AG04450 (cell line): ENCODE measurements at regions of chr19 and their contacts with region 1.

Region 1: DNA sequence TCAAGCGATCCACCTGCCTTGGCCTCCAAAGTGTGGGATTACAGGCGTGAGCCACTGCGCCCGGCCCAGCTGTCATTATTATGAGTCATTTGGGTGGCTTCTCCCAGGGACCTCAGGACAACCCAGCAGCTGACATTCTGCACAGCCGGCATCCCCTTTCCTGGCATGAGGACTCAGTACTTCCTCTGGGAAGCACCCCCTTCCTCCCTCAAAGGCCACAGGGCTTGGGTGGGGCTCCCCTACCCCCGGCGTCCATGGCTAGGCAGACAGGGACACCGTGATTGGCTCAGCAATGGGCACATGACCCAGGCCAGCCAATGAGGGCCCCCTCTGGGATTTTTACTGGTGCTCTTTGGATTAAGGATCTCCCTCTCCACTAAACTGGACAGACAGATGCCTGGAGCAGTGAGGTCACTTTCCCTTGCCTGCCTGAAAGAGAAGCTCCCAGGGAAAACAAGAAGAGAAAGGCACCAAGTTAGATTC is 6.0 kb downstream of the KANK2 start:
- DNase-seq: no peak
- H3K4me3 ChIP-seq: no peak overlapping the region
- H3K27ac ChIP-seq: peak overlapping the region; percentile 39
- H3K27me3 ChIP-seq: no peaks in the 10 kb centered on the region
- CTCF ChIP-seq: no peak

Region 2: DNA sequence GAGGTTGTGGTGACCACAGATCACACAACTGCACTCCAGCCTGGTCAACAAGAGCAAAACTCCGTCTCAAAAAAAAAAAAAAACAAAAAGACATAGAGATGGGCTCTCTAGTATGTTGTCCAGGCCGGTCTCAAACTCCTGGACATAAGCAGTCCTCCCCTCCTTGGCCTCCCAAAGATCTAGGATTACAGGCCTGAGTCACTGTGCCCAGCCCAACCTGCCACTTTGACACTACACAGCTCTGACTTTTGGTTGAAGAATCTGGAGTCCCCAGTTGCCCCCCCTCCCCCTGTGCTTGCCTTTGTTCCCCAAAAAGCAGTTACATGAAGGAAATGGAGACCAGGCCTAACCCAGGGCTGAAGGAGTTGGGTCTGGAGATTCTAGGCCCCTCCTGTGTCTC is 307.0 kb before region 1 on chr19:
- CTCF ChIA-PET with region 1: no interaction called
- POLR2A ChIA-PET with region 1: interaction called, 11 read pairs
- DNase-seq: no peak
- H3K4me3 ChIP-seq: no peak overlapping the region
- H3K27ac ChIP-seq: peak overlapping the region; percentile 39
- H3K27me3 ChIP-seq: no peaks in the 10 kb centered on the region
- CTCF ChIP-seq: no peak

Region 3: DNA sequence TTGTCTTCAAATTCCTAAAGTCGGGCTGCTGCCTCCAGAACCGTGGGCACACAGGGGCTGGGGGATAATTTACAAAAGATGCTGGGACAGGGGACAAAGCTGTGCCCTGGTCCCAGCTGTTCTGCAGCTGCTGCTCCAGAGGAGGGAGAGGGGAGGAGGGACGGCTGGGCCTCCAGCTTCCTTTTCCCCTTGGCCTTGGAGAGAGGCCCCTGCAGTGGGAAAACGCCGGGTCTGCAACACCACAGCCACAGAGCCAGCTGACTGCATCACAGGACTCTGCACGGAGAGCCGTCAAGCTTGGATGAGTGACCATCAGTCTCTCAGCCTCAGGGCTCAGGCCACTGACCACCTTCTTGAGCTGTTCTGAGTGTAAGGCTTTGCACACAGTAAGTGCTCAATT is 64.9 kb after region 1 on chr19:
- CTCF ChIA-PET with region 1: no interaction called
- POLR2A ChIA-PET with region 1: no interaction called
- DNase-seq: no peak
- H3K4me3 ChIP-seq: no peak overlapping the region
- H3K27ac ChIP-seq: peak overlapping the region; percentile 21
- H3K27me3 ChIP-seq: no peaks in the 10 kb centered on the region
- CTCF ChIP-seq: no peak

Region 4: DNA sequence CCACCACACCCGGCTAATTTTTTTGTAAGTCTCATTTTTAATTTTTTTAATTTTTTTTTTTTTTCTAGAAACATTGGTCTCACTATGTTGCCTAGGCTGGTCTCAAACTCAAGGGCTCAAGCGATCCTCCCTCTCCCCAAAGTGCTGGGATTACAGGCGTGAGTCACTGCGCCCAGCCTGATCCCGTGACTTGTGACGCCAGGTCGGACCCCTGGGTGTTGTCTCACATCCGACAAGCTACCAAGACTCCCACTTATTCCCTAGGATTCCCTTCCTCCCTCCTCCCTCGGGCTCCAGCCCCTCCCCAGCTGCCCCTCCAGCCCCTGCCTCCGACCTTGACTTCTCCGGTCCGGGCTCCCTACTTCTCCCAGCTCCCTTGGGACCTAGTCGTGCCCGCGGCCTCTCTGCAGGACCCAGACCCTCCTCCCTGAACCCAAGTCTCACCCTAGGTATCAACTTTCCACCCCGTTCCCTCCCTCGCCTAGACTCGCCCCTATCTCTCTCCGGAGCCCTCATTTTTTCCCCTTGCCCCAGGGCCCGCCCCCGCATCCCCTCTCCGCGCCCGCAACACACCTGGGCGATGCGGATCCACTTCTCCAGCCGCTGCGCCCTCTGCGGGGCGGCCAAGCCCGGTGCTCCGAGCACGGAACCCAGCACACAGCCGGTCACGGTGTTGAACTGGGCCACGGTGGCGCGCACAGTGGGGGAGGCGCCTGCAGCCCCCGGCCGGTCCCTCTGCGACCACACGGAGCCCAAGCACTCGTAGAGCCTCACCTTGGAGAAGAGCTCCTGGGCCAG is 214.7 kb after region 1 on chr19:
- CTCF ChIA-PET with region 1: no interaction called
- POLR2A ChIA-PET with region 1: no interaction called
- DNase-seq: no peak
- H3K4me3 ChIP-seq: no peak overlapping the region
- H3K27ac ChIP-seq: no peak overlapping the region
- H3K27me3 ChIP-seq: no peaks in the 10 kb centered on the region
- CTCF ChIP-seq: peak; percentile 46

Region 5: DNA sequence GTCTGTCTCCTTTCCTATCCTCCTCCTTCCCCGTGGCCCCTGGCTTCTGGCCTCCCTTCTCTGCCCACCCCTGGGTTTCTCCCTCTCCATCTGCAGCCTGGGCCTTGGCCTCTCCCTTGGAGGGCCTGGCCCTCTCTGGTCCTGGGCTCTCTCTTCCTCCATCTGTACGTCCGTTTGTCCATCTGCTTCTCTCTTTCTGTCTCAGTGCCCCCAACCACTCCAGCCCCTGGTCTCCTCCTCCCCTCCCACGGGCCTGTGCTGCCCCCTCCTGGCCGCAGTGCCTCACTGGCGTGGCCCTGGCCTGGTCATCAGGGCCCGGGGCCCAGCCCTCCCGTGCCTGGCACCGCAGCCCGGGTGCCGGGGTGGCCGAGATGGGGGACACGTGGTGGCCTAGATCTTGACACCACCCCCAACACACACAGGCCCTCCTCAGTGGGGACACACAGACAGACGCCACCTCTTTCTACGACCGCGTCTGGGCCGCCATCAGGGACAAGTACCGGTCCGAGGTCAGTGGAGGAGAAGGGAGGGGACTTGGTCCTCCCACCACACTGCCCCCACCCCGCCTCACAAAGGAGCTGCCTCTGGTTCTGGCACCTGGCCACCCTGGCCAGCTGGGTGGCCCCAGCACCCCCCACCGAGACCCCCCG is 255.5 kb after region 1 on chr19:
- CTCF ChIA-PET with region 1: no interaction called
- POLR2A ChIA-PET with region 1: interaction called, 14 read pairs
- DNase-seq: no peak
- H3K4me3 ChIP-seq: no peak overlapping the region
- H3K27ac ChIP-seq: no peak overlapping the region
- H3K27me3 ChIP-seq: no peaks in the 10 kb centered on the region
- CTCF ChIP-seq: peak; percentile 74